Psoas muscle (tissue), 8 donors: ENCODE measurements at regions of chr15 and their contacts with region 1.

Region 1: DNA sequence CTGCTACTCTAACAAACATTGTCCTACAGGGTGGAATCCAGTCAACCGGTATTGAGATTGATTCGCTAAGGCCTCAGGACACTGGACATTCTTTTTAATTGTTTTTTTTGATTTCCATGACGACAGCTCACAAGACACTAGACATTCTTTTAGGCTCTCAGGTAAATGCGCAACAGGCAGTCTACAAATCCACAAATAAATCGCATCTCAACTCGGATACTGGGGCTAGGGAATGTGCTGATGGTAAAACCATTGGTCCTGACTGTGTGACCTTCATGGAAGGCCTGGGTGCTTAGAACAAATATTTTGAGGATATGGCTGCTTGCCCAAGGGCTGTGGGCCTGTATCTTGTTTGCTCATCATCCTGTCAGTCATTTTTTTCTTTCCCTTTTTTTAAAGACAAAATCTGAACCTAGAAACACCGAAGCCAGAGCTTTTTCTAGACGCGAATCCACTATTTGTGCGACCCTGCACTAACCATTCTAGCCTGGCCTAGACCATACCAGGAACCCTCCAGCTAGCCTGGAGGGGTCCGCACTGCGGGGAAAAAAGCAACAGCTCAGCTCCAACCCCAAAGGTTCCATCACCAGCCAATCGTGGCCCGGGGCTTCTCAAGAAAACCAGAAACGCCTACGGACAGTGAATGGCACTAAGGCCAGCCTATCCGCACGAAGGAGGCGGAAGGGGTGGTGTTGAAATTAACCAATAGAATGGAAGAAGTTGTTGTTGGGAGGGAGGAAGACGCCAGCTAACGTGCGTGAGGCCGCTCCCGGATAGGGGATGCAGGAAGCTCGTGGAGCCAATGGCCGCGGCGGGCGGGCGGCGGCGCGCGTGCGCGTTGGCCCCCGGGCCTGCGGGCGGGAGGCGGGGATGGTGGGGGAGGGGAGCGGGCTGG is 18.1 kb upstream of the CHD2 start:
- DNase-seq: peak; percentile 99
- ATAC-seq: peak; percentile 90 to 97 (median 96)
- H3K4me3 ChIP-seq: peak overlapping the region; percentile 83
- H3K27ac ChIP-seq: peak overlapping the region; percentile 90
- H3K4me1 ChIP-seq: peaks cover 33% of the 10 kb centered on the region
- H3K27me3 ChIP-seq: no peaks in the 10 kb centered on the region
- CTCF ChIP-seq: no peak

Region 2: GRCh38 chr15:92831655-92832328 is 50.3 kb before region 1 on chr15:
- intact Hi-C with region 1: loop called (anchors 1 to 2 kb)
- DNase-seq: peak; percentile 89 to 97
- ATAC-seq: peak; percentile 94 to 98 (median 96)
- H3K4me3 ChIP-seq: peak overlapping the region; percentile 59
- H3K27ac ChIP-seq: peak overlapping the region; percentile 95
- H3K4me1 ChIP-seq: peaks cover 35% of the 10 kb centered on the region
- H3K27me3 ChIP-seq: no peaks in the 10 kb centered on the region
- CTCF ChIP-seq: peak; percentile 7

Region 3: DNA sequence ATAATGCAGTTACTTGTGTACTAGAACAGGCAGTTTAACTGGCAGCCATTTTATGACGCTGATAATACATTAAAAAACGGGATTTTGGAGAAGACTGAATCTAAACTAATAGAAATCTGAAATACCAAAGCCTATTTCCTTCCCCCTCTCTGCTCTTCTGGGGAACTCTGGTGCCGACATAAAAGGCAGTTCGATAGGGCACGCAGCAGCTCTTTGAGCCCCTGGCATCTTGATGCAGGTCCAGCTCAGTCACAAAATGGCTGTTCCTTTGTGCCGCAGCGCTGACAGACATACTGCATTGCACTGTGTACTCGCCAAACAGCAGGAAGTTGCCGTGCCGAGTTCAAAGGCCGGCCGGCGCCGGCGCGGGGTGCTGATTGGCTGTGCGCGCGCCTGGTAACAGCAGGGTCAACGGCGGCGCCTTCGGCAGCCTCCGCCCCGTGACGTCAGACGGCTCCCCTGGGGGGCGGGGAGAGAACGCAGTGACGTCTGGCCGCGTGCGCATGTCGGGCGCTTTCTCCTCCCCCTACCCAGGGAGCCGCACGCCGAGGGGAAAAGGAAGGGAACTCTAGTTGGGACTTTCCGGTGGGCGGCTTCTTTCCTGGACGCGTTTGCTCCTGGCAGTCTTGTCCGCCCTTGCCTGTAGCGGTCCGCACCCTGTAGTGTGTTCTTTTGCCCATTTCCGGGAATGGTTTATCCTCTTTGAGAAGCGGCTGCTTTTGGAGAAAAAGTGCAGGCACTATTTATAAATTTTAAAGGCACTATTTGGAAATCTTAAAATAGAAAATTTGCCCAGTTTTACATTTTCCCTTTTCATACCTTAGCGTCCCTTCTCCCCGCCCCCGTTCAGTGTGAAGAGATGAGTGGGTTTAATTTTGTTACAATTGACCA is 22.1 kb after region 1 on chr15:
- intact Hi-C with region 1: loop called in 1 of 2 experiments (anchors 1 kb)
- DNase-seq: peak; percentile 99 to 100
- ATAC-seq: peak; percentile 86 to 95 (median 90)
- H3K4me3 ChIP-seq: peak overlapping the region; percentile 68
- H3K27ac ChIP-seq: peak overlapping the region; percentile 95
- H3K4me1 ChIP-seq: peaks cover 40% of the 10 kb centered on the region
- H3K27me3 ChIP-seq: no peaks in the 10 kb centered on the region
- CTCF ChIP-seq: no peak